ENCODE measurements at regions of chr4 and their contacts with region 1.

Region 1: GRCh38 chr4:89657931-89658700 is 178.8 kb downstream of the SNCA start:
- DNase-seq: peak; percentile 3
- H3K4me3 ChIP-seq: no peak overlapping the region
- CTCF ChIP-seq: peak; percentile 36

Region 2: GRCh38 chr4:89368861-89369260 is 289.3 kb before region 1 on chr4:
- CTCF ChIA-PET with region 1: no interaction called
- POLR2A ChIA-PET with region 1: no interaction called
- DNase-seq: no peak
- H3K4me3 ChIP-seq: no peak overlapping the region
- CTCF ChIP-seq: no peak

Region 3: GRCh38 chr4:89868999-89869589 is 211.0 kb after region 1 on chr4:
- CTCF ChIA-PET with region 1: interaction called, 88 read pairs
- POLR2A ChIA-PET with region 1: no interaction called
- DNase-seq: no peak
- H3K4me3 ChIP-seq: no peak overlapping the region
- CTCF ChIP-seq: no peak

Region 4: DNA sequence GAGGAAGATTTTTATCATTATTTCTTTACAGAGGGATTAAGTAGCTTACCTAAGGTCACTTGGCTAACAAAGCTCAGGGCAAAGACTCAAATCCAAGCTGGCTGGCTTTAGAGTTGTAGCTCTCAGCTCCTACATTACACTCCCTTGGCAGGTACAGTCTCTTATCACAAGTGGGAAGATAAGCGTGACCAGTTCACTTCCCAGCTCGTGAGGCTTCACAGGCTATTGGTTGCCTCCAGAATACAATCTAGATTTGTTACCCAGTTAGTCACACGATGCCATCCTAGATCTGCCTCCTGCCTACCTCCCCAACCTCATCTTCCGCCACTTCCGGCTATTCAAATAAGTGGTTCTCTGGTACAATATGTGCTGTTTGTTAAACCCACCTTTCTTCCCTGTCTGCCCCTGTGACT is 240.2 kb after region 1 on chr4:
- CTCF ChIA-PET with region 1: interaction called, 14 read pairs
- POLR2A ChIA-PET with region 1: no interaction called
- DNase-seq: no peak
- H3K4me3 ChIP-seq: no peak overlapping the region
- CTCF ChIP-seq: no peak